K562 (cell line): ENCODE measurements at regions of chr2 and their contacts with region 1.

Region 1: DNA sequence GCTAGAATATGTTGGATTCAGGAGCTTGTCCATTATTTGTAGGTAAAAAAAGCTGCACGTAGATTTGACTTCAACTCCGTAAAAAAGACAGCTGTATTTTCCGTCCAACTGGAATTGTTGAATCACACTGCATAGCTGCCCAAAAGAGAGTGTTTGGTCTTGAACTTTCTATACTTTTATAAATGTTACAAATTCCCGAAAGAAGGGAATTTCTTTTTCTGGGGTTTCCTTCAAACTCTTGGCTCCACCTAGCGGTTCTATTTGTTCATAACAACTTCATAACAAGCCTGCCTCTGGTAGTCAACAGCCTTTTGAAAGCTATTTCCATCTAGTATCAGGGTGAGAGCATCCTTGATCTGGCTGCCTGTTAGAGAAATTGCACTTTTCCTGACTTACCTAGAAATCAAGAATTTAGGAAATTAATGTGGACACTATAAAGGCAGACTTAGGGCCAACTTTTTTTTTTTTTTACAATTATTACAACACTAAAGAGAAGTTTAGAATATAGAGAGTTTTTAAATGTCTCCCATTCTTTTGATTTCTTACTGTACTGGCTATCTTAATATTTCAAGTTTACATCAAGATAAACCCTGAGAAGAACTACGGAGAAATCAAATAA is 48.1 kb downstream of the TMEM185B start:
- DNase-seq: peak; percentile 55 to 70 (median 67)
- ATAC-seq: peak; percentile 60
- H3K4me3 ChIP-seq: no peak overlapping the region
- H3K27ac ChIP-seq: no peak overlapping the region
- H3K4me1 ChIP-seq: peaks cover 0 to 5% of the 10 kb centered on the region in 2 experiments; a peak in 3 of 5 replicates
- H3K27me3 ChIP-seq: no peaks in the 10 kb centered on the region
- CTCF ChIP-seq: peak; percentile 59 to 80 (median 64); a peak in 5 of 6 replicates
- EP300 ChIP-seq: no peak
- POLR2A ChIP-seq: no peak
- RAD21 ChIP-seq: peak; percentile 79 to 85

Region 2: DNA sequence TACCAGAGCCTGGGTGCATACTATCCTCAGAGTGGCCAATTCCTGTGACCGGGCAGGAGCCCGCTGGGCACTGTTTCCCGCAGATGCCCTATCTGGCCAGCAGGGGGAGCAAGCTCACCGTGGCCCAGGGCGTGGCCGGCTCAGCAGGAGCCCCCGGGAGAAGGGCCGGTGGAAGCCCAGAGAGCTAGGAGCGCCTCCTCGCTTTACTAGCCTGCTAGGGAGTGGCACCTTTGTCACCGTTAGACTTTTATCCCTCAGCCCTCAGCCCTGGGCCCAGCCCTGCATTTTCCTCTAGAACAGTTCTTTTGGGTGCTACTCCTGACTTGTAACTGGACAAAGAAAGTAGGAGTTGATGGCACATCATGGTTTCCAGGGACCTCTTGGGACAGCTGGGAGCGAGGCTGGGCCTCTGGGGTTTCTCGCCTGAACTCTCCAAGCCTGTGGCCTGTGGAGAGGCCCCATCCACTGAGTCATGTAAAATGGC is 472.1 kb before region 1 on chr2:
- CTCF ChIA-PET with region 1: interaction called, 9 read pairs
- POLR2A ChIA-PET with region 1: interaction called, 3 read pairs
- in situ Hi-C with region 1: no loop called
- intact Hi-C with region 1: loop called (anchors 2 kb)
- DNase-seq: peak; percentile 78 to 84 (median 81)
- ATAC-seq: peak; percentile 97
- H3K4me3 ChIP-seq: no peak overlapping the region
- H3K27ac ChIP-seq: no peak overlapping the region
- H3K4me1 ChIP-seq: peaks cover 0 to 4% of the 10 kb centered on the region in 2 experiments; a peak in 3 of 5 replicates
- H3K27me3 ChIP-seq: peaks cover 0 to 4% of the 10 kb centered on the region in 2 experiments; a peak in 2 of 5 replicates
- CTCF ChIP-seq: peak; percentile 89 to 97 (median 92)
- EP300 ChIP-seq: no peak
- POLR2A ChIP-seq: no peak
- RAD21 ChIP-seq: peak; percentile 80 to 94

Region 3: DNA sequence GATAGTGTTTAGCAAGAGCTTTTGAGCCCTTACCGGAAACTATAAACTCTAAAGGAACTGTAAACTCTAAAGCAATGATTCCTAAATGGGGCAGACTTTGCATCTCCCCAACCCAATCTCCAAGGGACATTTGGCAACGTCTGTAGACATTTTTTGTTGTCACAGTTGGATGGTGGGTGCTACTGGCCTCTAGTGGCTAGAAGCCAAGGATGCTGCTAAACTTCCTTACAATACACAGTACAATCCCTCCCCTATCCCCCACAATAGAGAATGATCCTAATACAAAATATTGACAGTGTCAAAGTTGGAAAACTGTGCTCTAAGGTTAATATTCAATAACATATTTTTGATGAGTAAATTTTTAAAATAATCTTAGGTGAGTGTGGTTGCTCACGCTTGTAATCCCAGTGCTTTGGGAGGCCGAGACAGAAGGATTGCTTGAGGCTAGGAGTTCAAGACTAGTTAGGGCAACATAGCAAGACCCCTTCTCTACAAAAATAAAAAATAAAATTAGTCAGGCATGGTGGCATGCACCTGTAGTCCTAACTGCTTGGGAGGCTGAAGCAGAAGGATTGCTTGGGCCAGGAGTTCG is 348.6 kb before region 1 on chr2:
- CTCF ChIA-PET with region 1: interaction called, 3 read pairs
- POLR2A ChIA-PET with region 1: no interaction called
- in situ Hi-C with region 1: no loop called
- intact Hi-C with region 1: loop called (anchors 5 kb)
- DNase-seq: peak; percentile 12 to 58 (median 28)
- ATAC-seq: peak; percentile 95
- H3K4me3 ChIP-seq: no peak overlapping the region
- H3K27ac ChIP-seq: no peak overlapping the region
- H3K4me1 ChIP-seq: 0 out of 5 replicates have a peak, but pooled peaks cover 0 to 3% of the 10 kb centered on the region in 2 experiments
- H3K27me3 ChIP-seq: no peaks in the 10 kb centered on the region
- CTCF ChIP-seq: peak; percentile 63 to 76 (median 68)
- EP300 ChIP-seq: no peak
- POLR2A ChIP-seq: no peak
- RAD21 ChIP-seq: peak; percentile 48 to 69

Region 4: DNA sequence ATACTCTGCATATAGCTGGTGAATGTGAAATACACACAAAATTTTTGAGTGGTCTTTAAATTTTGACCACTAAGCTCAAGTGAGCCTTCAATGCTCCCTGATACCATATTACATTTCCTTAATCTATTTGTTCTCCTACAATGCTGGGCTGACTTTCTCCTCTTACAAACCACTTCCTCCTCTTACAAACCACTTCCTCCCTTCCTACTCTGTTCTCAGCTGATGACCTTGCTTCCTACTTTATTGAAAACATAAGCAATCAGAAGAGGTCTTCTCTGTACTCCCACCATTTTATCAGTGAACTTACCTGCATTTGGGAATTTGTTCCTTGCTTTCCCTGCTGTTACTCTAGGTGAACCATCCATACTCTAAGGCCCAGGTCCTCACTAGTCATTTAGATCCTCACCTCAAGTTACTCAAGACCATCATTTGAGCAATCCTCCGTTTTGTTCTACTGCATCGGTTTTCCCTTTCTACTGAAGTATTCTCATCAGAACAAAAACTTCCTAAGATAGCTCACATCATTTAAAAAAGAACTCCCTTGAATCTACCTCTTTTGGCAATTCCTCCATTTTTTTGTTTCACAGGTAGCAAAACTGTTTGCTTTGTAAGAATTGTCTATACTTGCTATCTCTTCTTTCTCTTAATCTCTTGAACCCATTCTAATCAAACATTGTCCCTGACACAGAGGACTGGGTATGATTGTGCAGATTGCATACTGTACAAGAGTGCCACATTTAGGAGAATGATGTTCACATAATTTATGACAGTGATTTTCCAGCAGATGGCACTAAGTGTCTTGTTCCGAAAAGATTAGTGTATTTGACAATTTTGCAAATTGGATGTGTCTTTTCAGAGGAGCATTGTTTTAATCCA is 65.6 kb before region 1 on chr2:
- CTCF ChIA-PET with region 1: interaction called, 8 read pairs
- POLR2A ChIA-PET with region 1: interaction called, 3 read pairs
- in situ Hi-C with region 1: no loop called
- intact Hi-C with region 1: loop called (anchors 2 kb)
- DNase-seq: peak; percentile 8 to 23 (median 14)
- ATAC-seq: peak; percentile 86
- H3K4me3 ChIP-seq: no peak overlapping the region
- H3K27ac ChIP-seq: no peak overlapping the region
- H3K4me1 ChIP-seq: no peaks in the 10 kb centered on the region; a peak in 1 of 5 replicates
- H3K27me3 ChIP-seq: 0 out of 5 replicates have a peak, but pooled peaks cover 0 to 2% of the 10 kb centered on the region in 2 experiments
- CTCF ChIP-seq: peak; percentile 40 to 71 (median 49); a peak in 4 of 6 replicates
- EP300 ChIP-seq: no peak
- POLR2A ChIP-seq: no peak
- RAD21 ChIP-seq: peak; percentile 56 to 78